CD8-positive, alpha-beta T cell (primary cell): ENCODE measurements at regions of chr2 and their contacts with region 1.

Region 1: DNA sequence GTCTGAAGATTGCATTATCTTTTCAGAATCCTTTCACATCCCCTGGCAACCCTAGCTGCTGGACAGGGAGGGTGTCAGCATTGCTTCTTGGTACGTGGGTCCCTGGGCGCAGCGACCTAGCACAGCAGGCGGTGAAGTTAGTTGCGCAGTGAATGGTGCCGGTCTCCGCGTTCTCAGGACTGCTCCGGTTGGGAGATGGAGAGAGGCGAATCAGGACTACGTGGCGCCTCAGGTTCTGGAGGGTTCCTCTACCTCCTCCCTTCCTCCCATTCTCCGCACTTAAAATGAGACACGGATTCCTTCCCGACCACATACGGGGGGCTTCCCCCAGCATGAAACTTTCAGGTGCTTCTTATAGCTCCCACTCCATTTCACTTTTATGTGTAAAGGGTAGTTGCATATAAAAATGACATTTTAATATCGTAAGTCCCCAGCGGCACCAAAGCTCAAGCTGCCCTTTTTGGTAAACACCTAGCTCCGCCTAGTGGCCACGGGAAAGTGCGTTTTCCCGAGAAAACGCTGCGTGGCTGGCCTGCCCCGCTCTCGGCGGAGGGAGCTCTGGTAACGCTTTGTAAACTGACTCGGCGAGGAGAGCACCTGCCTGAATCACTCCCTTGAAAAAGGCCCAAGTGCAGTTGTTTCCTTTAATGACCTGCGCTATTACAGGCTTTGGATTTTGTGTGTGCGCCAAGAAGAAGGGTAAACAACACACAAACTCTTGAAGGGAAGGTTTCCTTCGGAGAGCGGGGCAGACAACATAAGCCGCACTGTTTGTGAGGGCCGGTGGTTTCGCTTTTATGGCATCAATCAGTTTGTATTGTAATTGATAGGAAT is 32.9 kb upstream of the INHBB start:
- DNase-seq: peak; percentile 45 to 82 (median 72)
- ATAC-seq: peak; percentile 76
- H3K4me3 ChIP-seq: peak overlapping the region; percentile 41 to 43
- H3K4me3 Mint-ChIP-seq: peak overlapping the region; percentile 73
- H3K27ac ChIP-seq: no peak overlapping the region
- H3K27ac Mint-ChIP-seq: peak overlapping the region; percentile 18
- H3K4me1 ChIP-seq: peaks cover 27% of the 10 kb centered on the region
- H3K4me1 Mint-ChIP-seq: peaks cover 28% of the 10 kb centered on the region
- H3K27me3 ChIP-seq: peaks cover 0 to 2% of the 10 kb centered on the region in 2 experiments
- H3K27me3 Mint-ChIP-seq: peaks cover 2% of the 10 kb centered on the region
- CTCF ChIP-seq: peak; percentile 61

Region 2: GRCh38 chr2:119641562-119642258 is 671.4 kb before region 1 on chr2:
- CTCF ChIA-PET with region 1: interaction called, 7 read pairs
- POLR2A ChIA-PET with region 1: no interaction called
- intact Hi-C with region 1: loop called (anchors 2 to 5 kb)
- DNase-seq: peak; percentile 49 to 82 (median 69)
- ATAC-seq: peak; percentile 92
- H3K4me3 ChIP-seq: no peak overlapping the region
- H3K4me3 Mint-ChIP-seq: no peak overlapping the region
- H3K27ac ChIP-seq: no peak overlapping the region
- H3K27ac Mint-ChIP-seq: no peak overlapping the region
- H3K4me1 ChIP-seq: no peaks in the 10 kb centered on the region
- H3K4me1 Mint-ChIP-seq: peaks cover 2% of the 10 kb centered on the region
- H3K27me3 ChIP-seq: no peaks in the 10 kb centered on the region
- H3K27me3 Mint-ChIP-seq: peaks cover 10% of the 10 kb centered on the region
- CTCF ChIP-seq: peak; percentile 95

Region 3: DNA sequence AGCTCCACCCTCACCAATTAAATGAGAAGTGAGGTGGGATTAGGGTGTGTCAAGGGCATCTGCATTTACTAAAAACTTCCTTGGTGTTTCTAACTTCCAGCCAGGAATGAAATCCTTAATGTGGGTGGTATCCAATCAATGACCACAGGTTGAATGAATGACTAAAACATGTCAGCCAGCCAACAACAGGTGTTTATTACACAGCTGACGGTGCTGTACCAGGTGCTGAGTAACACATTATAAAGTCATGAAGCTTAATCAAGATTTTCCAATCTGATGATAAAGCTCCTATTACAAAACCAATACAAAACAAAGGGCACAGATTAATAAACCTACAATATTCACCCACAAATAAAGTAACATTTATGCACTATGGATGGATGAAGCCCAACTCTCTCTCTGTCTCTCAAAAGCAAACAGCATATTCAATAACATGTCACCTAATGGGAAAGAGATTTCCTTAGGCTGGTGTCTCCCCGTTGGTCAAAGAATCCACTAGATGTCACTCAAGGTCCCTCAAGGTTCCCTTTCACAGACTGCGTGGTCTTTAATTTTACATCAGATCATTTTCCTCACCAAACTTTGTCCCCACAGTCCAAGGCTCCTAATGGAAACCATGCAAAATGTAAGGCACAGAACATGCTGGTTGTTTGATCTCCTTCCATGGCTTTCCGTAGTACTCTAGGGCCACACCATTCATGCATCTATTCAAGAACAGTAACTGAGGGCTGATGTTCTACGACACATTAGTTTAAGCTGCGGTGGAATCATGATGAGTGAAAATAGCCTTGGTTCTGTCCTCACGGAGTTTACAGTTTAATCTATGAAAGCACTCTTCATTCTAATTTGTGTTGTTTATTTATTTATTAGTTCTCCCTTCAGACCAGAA is 559.8 kb before region 1 on chr2:
- CTCF ChIA-PET with region 1: interaction called, 16 read pairs
- POLR2A ChIA-PET with region 1: no interaction called
- intact Hi-C with region 1: loop called (anchors 2 to 5 kb)
- DNase-seq: peak in 8 of 9 experiments; percentile 7 to 79 (median 33)
- ATAC-seq: peak; percentile 92
- H3K4me3 ChIP-seq: no peak overlapping the region
- H3K4me3 Mint-ChIP-seq: no peak overlapping the region
- H3K27ac ChIP-seq: no peak overlapping the region
- H3K27ac Mint-ChIP-seq: no peak overlapping the region
- H3K4me1 ChIP-seq: no peaks in the 10 kb centered on the region
- H3K4me1 Mint-ChIP-seq: peaks cover 5% of the 10 kb centered on the region
- H3K27me3 ChIP-seq: no peaks in the 10 kb centered on the region
- H3K27me3 Mint-ChIP-seq: no peaks in the 10 kb centered on the region
- CTCF ChIP-seq: peak; percentile 81

Region 4: DNA sequence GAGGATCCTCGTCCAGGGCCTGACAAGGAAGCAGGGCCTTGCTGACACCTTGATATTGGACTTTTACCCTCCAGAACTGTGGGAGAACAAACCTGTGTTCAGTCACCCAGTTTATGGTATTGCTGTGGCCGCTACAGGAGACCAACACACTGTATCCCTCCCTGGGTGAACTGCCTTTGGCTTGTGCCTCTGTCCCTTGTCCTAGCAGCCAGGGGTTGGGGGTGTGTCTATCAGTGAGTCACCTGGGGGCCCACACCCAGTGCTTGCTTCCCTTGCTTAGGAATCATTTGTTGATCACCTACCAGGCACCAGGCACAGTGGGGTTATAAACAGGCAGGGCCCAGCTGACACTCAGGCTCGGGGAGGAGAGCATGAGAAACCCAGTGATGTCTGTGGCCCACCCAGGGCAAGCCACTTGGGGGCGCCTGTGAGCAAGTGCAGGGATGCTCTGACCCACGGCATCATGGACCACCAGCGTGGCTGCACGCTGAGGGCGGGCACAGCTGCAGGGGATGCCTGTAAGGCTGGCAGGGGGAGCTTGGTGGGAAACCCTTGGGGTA is 107.0 kb before region 1 on chr2:
- CTCF ChIA-PET with region 1: interaction called, 5 read pairs
- POLR2A ChIA-PET with region 1: no interaction called
- intact Hi-C with region 1: loop called (anchors 1 to 5 kb)
- DNase-seq: peak in 4 of 9 experiments; percentile 30 to 46 (median 42)
- ATAC-seq: no peak
- H3K4me3 ChIP-seq: no peak overlapping the region
- H3K4me3 Mint-ChIP-seq: no peak overlapping the region
- H3K27ac ChIP-seq: no peak overlapping the region
- H3K27ac Mint-ChIP-seq: no peak overlapping the region
- H3K4me1 ChIP-seq: peaks cover 10% of the 10 kb centered on the region
- H3K4me1 Mint-ChIP-seq: peaks cover 9% of the 10 kb centered on the region
- H3K27me3 ChIP-seq: no peaks in the 10 kb centered on the region
- H3K27me3 Mint-ChIP-seq: no peaks in the 10 kb centered on the region
- CTCF ChIP-seq: no peak

Region 5: GRCh38 chr2:120231974-120232635 is 81.0 kb before region 1 on chr2:
- CTCF ChIA-PET with region 1: interaction called, 11 read pairs
- POLR2A ChIA-PET with region 1: interaction called, 3 read pairs
- intact Hi-C with region 1: no loop called
- DNase-seq: peak; percentile 27 to 90 (median 64)
- ATAC-seq: peak; percentile 91
- H3K4me3 ChIP-seq: peak overlapping the region; percentile 59 to 66
- H3K4me3 Mint-ChIP-seq: peak overlapping the region; percentile 93
- H3K27ac ChIP-seq: peak overlapping the region; percentile 60 to 84
- H3K27ac Mint-ChIP-seq: peak overlapping the region; percentile 92
- H3K4me1 ChIP-seq: peaks cover 39% of the 10 kb centered on the region
- H3K4me1 Mint-ChIP-seq: peaks cover 57% of the 10 kb centered on the region
- H3K27me3 ChIP-seq: no peaks in the 10 kb centered on the region
- H3K27me3 Mint-ChIP-seq: no peaks in the 10 kb centered on the region
- CTCF ChIP-seq: no peak

Region 6: DNA sequence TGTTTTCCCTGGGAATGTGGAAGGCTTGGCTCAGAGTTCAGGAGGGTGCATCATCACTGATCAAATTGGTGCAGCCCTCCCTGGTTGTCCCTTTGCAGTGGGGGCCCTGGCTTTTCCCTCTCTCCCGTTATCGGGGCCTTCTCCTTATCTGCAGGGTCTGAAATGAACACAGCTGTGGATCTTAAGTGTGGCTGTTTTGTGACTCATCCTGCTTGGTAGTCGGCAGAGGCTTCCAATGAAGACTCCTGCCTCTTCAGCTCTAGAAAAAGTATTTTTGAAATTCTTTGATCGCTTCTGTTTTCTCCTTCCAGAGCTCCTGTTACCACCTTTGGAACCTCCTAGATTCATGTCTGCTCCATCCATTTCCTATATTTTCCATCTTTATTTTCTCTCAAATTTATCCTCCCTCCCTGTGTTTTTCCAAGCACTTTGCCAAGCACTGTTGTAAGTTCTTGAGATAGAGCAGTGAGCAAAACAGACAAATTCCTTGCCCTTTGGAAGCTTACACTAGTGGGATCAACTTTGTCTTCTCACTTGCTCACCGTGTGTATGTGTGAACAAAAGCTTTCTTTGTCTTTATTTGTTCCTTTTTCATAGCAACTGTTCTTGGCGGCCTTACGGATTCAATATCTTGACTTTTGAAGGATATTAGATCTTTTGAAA is 14.8 kb before region 1 on chr2:
- CTCF ChIA-PET with region 1: interaction called, 34 read pairs
- POLR2A ChIA-PET with region 1: no interaction called
- intact Hi-C with region 1: no loop called
- DNase-seq: no peak
- ATAC-seq: no peak
- H3K4me3 ChIP-seq: no peak overlapping the region
- H3K4me3 Mint-ChIP-seq: no peak overlapping the region
- H3K27ac ChIP-seq: no peak overlapping the region
- H3K27ac Mint-ChIP-seq: no peak overlapping the region
- H3K4me1 ChIP-seq: peaks cover 8% of the 10 kb centered on the region
- H3K4me1 Mint-ChIP-seq: peaks cover 4% of the 10 kb centered on the region
- H3K27me3 ChIP-seq: no peaks in the 10 kb centered on the region
- H3K27me3 Mint-ChIP-seq: no peaks in the 10 kb centered on the region
- CTCF ChIP-seq: no peak